ENCODE measurements at regions of chr2 and their contacts with region 1.

Region 1: GRCh38 chr2:206159346-206160124 is at the starts of genes EEF1B2 and NDUFS1:
- DNase-seq: peak; percentile 98
- ATAC-seq: peak; percentile 92
- H3K4me3 Mint-ChIP-seq: peak within 1 kb of the TSS; percentile 75
- H3K27ac Mint-ChIP-seq: peak within 1 kb of the TSS; percentile 98
- H3K4me1 Mint-ChIP-seq: peaks cover 48% of the 10 kb centered on the region
- H3K27me3 Mint-ChIP-seq: no peaks in the 10 kb centered on the region
- CTCF ChIP-seq: no peak
- total RNA-seq, gene EEF1B2: 1,168 to 1,169 TPM
- total RNA-seq, gene NDUFS1: 81.2 to 89.3 TPM

Region 2: DNA sequence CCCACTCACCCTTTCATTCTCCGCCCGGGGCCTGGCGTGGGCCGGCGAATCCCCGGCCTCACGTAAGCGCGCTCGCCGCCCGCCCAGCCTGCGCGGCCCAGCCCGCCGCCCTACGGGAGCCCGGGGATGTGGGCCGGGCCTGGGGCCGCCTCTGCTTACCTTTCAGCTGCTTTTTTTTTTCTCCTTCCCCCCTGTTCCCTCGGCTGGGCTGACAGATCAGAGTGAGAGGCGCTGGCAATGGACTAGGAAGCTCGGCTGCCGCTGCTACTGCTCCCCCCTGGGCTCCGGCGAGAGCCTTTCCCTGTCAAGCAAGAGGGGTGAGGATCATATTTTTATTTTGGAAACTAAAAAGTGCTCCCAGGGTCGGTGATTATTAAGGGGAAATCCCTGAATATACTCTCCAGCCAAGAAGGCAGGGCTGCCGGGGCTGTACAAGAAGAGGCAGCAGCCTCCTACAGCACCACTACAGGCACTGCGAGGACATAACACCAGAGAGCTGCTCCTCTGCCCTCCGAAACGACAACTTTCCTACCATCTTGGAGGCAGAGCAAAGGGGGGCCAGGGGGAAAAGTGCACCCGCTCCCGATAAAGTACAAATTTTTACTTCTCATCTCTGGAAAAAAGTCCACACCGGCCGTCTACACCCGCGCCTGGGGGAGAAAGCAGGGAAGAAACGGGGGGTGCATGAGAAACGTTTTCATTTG is 73.6 kb before region 1 on chr2 and contains the start of gene INO80D:
- CTCF ChIA-PET with region 1: interaction called, 4 read pairs
- POLR2A ChIA-PET with region 1: interaction called, 12 read pairs
- intact Hi-C with region 1: loop called (anchors 2 kb)
- DNase-seq: peak; percentile 90
- ATAC-seq: peak; percentile 94
- H3K4me3 Mint-ChIP-seq: peak within 1 kb of the TSS; percentile 99
- H3K27ac Mint-ChIP-seq: peak within 1 kb of the TSS; percentile 98
- H3K4me1 Mint-ChIP-seq: peaks cover 35% of the 10 kb centered on the region
- H3K27me3 Mint-ChIP-seq: no peaks in the 10 kb centered on the region
- CTCF ChIP-seq: peak; percentile 75
- total RNA-seq, gene INO80D: 15.9 to 16.7 TPM